Calu3 (cell line): ENCODE measurements at regions of chr2 and their contacts with region 1.

Region 1: GRCh38 chr2:182186132-182186735 is 200.6 kb downstream of the PPP1R1C start:
- DNase-seq: peak; percentile 26
- H3K4me3 Mint-ChIP-seq: no peak overlapping the region
- H3K27ac Mint-ChIP-seq: no peak overlapping the region
- H3K4me1 Mint-ChIP-seq: no peaks in the 10 kb centered on the region
- H3K27me3 Mint-ChIP-seq: no peaks in the 10 kb centered on the region
- CTCF ChIP-seq: peak; percentile 64

Region 2: DNA sequence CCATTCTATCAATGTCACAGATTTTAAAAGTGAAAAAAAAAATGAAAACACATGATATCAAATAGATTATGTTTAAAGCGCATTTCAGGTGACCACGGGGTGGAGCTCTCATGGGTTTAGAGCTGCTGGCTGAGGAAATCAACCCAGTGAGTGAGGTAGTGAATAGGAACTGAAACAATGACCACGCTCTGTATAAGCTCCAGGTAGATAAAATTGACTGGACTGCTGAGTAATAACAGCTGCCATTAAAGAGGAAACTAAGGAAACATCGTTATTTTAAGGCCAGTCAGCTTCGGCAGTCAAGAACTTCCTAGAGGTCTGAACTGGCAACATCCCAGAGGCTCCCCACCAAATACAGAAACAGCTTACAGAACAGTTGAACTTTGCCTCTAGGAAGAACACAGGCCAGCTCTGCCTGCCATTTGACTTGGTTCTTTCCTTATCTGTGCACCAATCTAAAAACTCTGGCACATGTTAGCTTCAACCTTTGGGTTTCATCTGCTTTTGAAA is 54.7 kb after region 1 on chr2:
- CTCF ChIA-PET with region 1: interaction called, 5 read pairs
- intact Hi-C with region 1: loop called (anchors 2 kb)
- DNase-seq: peak; percentile 70
- H3K4me3 Mint-ChIP-seq: no peak overlapping the region
- H3K27ac Mint-ChIP-seq: no peak overlapping the region
- H3K4me1 Mint-ChIP-seq: peaks cover 13% of the 10 kb centered on the region
- H3K27me3 Mint-ChIP-seq: no peaks in the 10 kb centered on the region
- CTCF ChIP-seq: peak; percentile 29

Region 3: GRCh38 chr2:182259629-182260150 is 73.5 kb after region 1 on chr2:
- CTCF ChIA-PET with region 1: no interaction called
- intact Hi-C with region 1: no loop called
- DNase-seq: no peak
- H3K4me3 Mint-ChIP-seq: no peak overlapping the region
- H3K27ac Mint-ChIP-seq: no peak overlapping the region
- H3K4me1 Mint-ChIP-seq: no peaks in the 10 kb centered on the region
- H3K27me3 Mint-ChIP-seq: no peaks in the 10 kb centered on the region
- CTCF ChIP-seq: no peak